ENCODE measurements at regions of chr5 and their contacts with region 1.

Region 1: GRCh38 chr5:42858031-42858643 is 46.4 kb upstream of the SELENOP start:
- DNase-seq: no peak

Region 2: GRCh38 chr5:42811591-42812446 is 46.3 kb before region 1 on chr5 and contains the start of gene SELENOP:
- intact Hi-C with region 1: loop called (anchors 2 kb)
- DNase-seq: no peak
- total RNA-seq, gene SELENOP: 149 TPM

Region 3: DNA sequence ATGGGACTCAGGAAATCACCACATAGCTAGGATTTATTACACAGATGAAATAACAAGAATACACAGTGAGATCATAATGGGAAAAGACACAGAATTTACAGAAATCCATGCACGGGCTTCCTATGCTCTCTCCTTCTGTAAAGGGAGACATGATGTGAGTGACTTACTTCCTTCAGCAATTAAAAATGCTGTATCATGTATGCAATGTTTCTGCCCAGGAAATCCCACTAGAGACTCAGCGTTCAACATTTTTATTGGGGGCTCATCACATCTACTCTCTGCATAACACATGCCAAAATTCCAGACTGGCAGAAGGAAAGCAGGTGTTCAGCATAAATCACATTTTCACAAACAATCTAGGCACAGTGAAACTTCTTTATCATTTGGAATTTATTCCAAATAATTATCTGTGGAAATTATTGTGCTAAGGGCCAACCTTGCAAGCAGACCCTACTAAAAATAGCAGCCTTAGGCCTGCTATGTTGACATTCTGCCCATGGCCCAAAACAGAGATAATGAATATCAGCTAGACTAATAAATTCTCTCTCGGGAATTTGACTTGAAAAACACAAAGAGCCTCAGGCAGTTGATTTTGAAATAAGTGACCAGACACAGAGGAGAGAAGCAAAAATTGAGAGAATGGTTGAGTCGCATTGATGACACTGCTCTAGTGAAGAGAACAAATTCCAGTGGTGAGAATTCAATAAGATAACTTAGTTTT is 15.1 kb before region 1 on chr5:
- intact Hi-C with region 1: loop called (anchors 1 kb)
- DNase-seq: no peak

Region 4: GRCh38 chr5:42908509-42909488 is 50.7 kb after region 1 on chr5:
- intact Hi-C with region 1: no loop called
- DNase-seq: peak; percentile 95

Region 5: GRCh38 chr5:42927730-42928129 is 69.6 kb after region 1 on chr5:
- intact Hi-C with region 1: no loop called
- DNase-seq: no peak

Measured in cardiac septum (tissue), 1 donor.